ENCODE measurements at regions of chr18 and their contacts with region 1.

Region 1: DNA sequence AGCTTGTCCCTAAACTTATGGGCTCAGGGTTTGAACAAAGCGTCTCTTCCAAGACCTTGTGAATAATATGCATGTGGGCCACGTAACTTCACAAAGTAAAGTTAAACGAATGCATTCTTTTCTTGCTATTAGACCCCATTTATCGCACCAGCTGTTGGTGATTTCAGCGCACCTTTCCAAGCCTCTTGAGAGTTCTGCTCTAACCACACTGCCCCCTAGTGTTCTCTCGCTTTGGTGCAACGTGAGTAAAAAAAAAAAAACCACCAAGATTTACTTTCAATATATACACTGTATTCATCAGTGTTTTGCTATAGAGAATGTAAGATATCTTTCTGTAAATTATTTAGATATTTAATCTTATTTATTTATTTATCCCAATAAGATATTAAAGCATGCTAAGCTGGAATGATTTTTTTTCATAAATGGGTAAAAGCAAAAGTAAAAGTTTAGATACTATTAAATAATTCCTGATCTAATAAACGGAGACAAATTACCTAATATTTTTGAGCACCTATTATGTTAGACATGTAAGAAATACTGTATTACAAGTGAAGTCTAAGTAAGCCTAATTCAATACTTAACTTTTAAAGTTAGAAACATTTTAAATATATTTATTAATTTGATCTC is 459.5 kb downstream of the DLGAP1 start:
- DNase-seq: peak; percentile 61
- H3K4me3 Mint-ChIP-seq: no peak overlapping the region
- H3K27ac Mint-ChIP-seq: no peak overlapping the region
- H3K4me1 Mint-ChIP-seq: peaks cover 2% of the 10 kb centered on the region
- H3K27me3 Mint-ChIP-seq: peaks cover 4% of the 10 kb centered on the region

Region 2: GRCh38 chr18:3281456-3282400 is 713.9 kb before region 1 on chr18:
- CTCF ChIA-PET with region 1: interaction called, 8 read pairs
- POLR2A ChIA-PET with region 1: no interaction called
- intact Hi-C with region 1: loop called (anchors 5 kb)
- DNase-seq: no peak
- H3K4me3 Mint-ChIP-seq: no peak overlapping the region
- H3K27ac Mint-ChIP-seq: no peak overlapping the region
- H3K4me1 Mint-ChIP-seq: peaks cover 6% of the 10 kb centered on the region
- H3K27me3 Mint-ChIP-seq: no peaks in the 10 kb centered on the region

Region 3: DNA sequence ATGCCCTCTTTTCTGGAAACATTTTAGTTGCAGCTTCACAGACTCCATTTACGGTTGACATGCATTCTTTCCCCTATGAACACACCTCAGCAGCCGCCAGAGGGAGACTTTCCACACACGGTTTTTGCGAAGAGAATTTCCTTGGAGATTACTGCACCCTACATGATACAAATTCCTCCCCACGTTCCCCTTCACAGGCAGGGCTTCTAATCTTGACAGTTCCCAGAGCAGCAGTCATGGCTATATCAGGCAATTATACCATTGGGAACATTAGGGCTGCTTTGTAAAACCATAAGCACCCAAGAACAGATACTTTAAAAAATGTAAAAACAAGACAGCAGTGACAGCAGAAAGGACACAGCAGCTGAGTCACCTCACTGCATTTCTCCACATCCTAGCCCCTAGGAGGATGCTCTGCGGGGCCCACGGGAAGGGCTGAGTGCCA is 291.8 kb before region 1 on chr18:
- CTCF ChIA-PET with region 1: interaction called, 4 read pairs
- POLR2A ChIA-PET with region 1: no interaction called
- intact Hi-C with region 1: loop called (anchors 5 kb)
- DNase-seq: peak; percentile 34
- H3K4me3 Mint-ChIP-seq: no peak overlapping the region
- H3K27ac Mint-ChIP-seq: no peak overlapping the region
- H3K4me1 Mint-ChIP-seq: no peaks in the 10 kb centered on the region
- H3K27me3 Mint-ChIP-seq: peaks cover 45% of the 10 kb centered on the region

Region 4: GRCh38 chr18:3983351-3983969 is 12.1 kb before region 1 on chr18:
- CTCF ChIA-PET with region 1: interaction called, 16 read pairs
- POLR2A ChIA-PET with region 1: no interaction called
- intact Hi-C with region 1: no loop called
- DNase-seq: no peak
- H3K4me3 Mint-ChIP-seq: no peak overlapping the region
- H3K27ac Mint-ChIP-seq: no peak overlapping the region
- H3K4me1 Mint-ChIP-seq: peaks cover 13% of the 10 kb centered on the region
- H3K27me3 Mint-ChIP-seq: peaks cover 2% of the 10 kb centered on the region

Region 5: GRCh38 chr18:4060427-4061281 is 65.1 kb after region 1 on chr18:
- CTCF ChIA-PET with region 1: no interaction called
- POLR2A ChIA-PET with region 1: no interaction called
- intact Hi-C with region 1: no loop called
- DNase-seq: no peak
- H3K4me3 Mint-ChIP-seq: no peak overlapping the region
- H3K27ac Mint-ChIP-seq: no peak overlapping the region
- H3K4me1 Mint-ChIP-seq: no peaks in the 10 kb centered on the region
- H3K27me3 Mint-ChIP-seq: peaks cover 3% of the 10 kb centered on the region

Region 6: DNA sequence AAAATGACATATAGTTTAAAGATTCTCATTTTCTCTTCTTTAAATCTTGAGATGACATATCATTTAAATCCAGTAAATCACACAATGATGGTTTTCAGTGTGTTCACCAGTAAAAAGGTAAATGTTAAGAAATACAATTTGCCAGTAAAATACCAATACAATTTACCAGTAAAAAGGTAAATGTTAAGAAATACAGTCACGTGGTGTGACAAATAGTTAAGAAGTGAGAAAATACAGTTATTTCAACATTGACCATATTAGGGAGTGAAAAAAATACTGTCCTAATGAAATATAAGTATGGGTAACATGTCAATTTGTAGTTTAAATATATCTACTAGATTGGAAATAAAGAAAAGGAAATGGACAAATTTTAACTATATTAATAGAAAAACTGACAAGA is 379.0 kb after region 1 on chr18:
- CTCF ChIA-PET with region 1: no interaction called
- POLR2A ChIA-PET with region 1: no interaction called
- intact Hi-C with region 1: no loop called
- DNase-seq: no peak
- H3K4me3 Mint-ChIP-seq: no peak overlapping the region
- H3K27ac Mint-ChIP-seq: no peak overlapping the region
- H3K4me1 Mint-ChIP-seq: no peaks in the 10 kb centered on the region
- H3K27me3 Mint-ChIP-seq: no peaks in the 10 kb centered on the region